Common myeloid progenitor, CD34-positive (primary cell): ENCODE measurements at regions of chr9 and their contacts with region 1.

Region 1: GRCh38 chr9:33466565-33467495 is 6.9 kb downstream of the NOL6 start:
- DNase-seq: peak in 2 of 3 donors; percentile 43 to 50
- H3K4me3 ChIP-seq: no peak overlapping the region
- H3K27ac ChIP-seq: no peak overlapping the region
- H3K4me1 ChIP-seq: peaks cover 0 to under 1% (median 0%) of the 10 kb centered on the region in 4 experiments
- H3K27me3 ChIP-seq: no peaks in the 10 kb centered on the region

Region 2: DNA sequence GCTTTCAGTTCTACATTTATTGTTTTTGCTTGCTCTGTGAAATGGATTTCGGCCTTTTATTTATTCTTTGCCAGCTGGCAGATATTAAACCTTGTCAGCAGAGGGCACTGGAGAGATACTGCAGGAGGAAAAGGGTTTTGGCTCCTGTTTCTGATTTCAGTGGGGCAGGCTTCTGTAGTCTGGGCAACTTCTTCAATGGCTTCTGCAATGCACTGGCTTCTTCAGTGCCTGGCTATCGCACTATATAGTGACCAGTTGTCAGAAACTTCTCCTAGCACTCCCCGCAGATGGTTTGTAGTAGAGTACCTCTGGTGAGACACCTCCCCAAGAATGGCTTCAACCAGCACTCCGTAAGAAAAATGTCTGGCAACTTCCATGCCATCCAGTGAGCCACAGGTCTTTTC is 179.7 kb before region 1 on chr9:
- CTCF ChIA-PET with region 1: interaction called, 14 read pairs
- POLR2A ChIA-PET with region 1: no interaction called
- DNase-seq: peak; percentile 73 to 90 (median 87)
- H3K4me3 ChIP-seq: no peak overlapping the region
- H3K27ac ChIP-seq: no peak overlapping the region
- H3K4me1 ChIP-seq: peaks cover 6 to 55% (median 40%) of the 10 kb centered on the region in 4 experiments
- H3K27me3 ChIP-seq: no peaks in the 10 kb centered on the region

Region 3: GRCh38 chr9:33393581-33393980 is 73.2 kb before region 1 on chr9:
- CTCF ChIA-PET with region 1: no interaction called
- POLR2A ChIA-PET with region 1: no interaction called
- DNase-seq: no peak
- H3K4me3 ChIP-seq: no peak overlapping the region
- H3K27ac ChIP-seq: no peak overlapping the region
- H3K4me1 ChIP-seq: no peaks in the 10 kb centered on the region
- H3K27me3 ChIP-seq: no peaks in the 10 kb centered on the region

Region 4: DNA sequence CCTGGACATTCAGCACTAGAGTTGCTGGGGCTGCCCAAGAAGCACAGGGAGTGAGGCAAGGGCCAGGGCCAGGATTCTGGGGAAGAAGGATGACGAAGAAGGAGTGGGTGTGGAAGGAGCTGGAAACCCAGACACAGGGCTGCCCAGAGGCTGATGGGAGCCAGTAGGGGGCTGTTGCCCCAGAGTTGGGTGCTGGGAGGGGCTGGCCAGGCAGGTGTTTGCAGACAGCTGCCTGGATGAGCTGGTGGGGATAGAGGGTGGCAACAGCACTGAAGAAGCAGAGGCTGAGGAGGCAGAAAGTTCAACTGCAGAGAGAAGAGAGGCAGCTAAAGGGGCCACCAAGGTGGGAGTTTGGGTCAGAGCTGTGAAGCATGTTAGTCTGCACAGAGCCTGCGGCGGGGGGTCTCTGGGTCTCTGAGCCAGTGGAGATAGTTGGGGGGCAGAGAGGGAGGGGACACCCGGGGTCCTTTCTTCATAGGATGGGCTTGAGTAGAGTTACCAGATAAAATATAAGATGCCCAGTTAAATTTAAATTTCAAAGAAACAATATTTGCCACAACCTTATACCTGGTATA is 62.0 kb before region 1 on chr9:
- CTCF ChIA-PET with region 1: interaction called, 40 read pairs
- POLR2A ChIA-PET with region 1: no interaction called
- DNase-seq: no peak
- H3K4me3 ChIP-seq: no peak overlapping the region
- H3K27ac ChIP-seq: no peak overlapping the region
- H3K4me1 ChIP-seq: no peaks in the 10 kb centered on the region
- H3K27me3 ChIP-seq: no peaks in the 10 kb centered on the region

Region 5: DNA sequence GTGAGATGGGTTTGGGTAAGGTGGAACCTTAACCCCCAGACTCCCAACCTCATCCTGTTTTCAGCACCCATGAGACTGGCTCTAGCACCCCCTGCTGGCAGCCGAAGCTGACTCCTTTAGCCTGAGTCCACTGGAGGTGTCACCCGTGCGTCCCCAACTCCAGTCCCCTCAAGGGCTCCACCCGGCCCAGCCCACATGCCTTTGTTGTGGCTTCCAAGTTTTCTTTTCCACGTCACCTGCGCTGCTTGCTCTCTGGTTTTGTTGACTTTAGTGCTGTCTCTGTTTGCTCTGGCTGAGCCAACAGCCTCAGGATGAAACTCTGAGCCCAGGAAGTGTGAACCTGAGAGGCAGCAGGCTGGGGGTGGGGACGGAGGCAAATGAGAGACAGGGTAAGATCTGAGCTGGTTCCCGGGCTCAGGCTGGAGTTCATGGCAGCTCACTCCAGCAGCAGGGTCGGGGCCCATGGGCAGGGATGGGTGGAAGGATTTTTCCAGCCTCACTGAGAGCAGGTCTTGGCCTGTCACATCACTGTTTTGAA is 51.3 kb before region 1 on chr9:
- CTCF ChIA-PET with region 1: interaction called, 17 read pairs
- POLR2A ChIA-PET with region 1: no interaction called
- DNase-seq: peak; percentile 53 to 74 (median 64)
- H3K4me3 ChIP-seq: no peak overlapping the region
- H3K27ac ChIP-seq: no peak overlapping the region
- H3K4me1 ChIP-seq: peaks cover 0 to 10% (median 3%) of the 10 kb centered on the region in 4 experiments
- H3K27me3 ChIP-seq: no peaks in the 10 kb centered on the region

Region 6: GRCh38 chr9:33430942-33431341 is 35.9 kb before region 1 on chr9:
- CTCF ChIA-PET with region 1: interaction called, 11 read pairs
- POLR2A ChIA-PET with region 1: no interaction called
- DNase-seq: peak in 1 of 3 donors; percentile 8
- H3K4me3 ChIP-seq: no peak overlapping the region
- H3K27ac ChIP-seq: no peak overlapping the region
- H3K4me1 ChIP-seq: peaks cover 0 to 5% (median 0%) of the 10 kb centered on the region in 4 experiments
- H3K27me3 ChIP-seq: no peaks in the 10 kb centered on the region

Region 7: GRCh38 chr9:33446946-33447798 is 19.7 kb before region 1 on chr9 and contains the start of gene AQP3:
- CTCF ChIA-PET with region 1: interaction called, 172 read pairs
- POLR2A ChIA-PET with region 1: no interaction called
- DNase-seq: peak; percentile 41 to 73 (median 63)
- H3K4me3 ChIP-seq: peak within 1 kb of the TSS; percentile 9 to 73 (median 62)
- H3K27ac ChIP-seq: no peak within 1 kb of the TSS
- H3K4me1 ChIP-seq: peaks cover 3 to 42% (median 28%) of the 10 kb centered on the region in 4 experiments
- H3K27me3 ChIP-seq: peaks cover 0 to 6% (median 4%) of the 10 kb centered on the region in 5 experiments

Region 8: DNA sequence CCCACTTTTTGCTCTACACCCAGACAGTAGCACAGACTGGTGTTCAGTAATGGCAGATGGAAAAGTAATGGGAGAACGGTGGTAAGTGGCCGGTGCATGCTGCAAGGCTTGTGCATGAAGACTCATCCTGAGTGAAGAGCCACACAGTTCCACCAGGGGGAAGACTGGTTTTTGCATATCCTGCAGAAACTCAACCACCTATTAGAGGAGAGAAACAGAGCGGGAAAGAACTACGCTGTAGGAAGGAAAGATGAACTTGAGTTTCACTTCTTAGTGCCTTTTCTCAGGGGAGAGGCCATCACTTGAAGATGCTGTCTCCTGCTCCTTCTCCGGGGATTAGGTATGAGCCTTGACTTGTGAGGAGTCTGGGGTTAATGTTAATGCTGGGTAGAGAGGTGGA is 319.1 kb after region 1 on chr9:
- CTCF ChIA-PET with region 1: no interaction called
- POLR2A ChIA-PET with region 1: no interaction called
- DNase-seq: peak; percentile 9 to 23 (median 22)
- H3K4me3 ChIP-seq: no peak overlapping the region
- H3K27ac ChIP-seq: no peak overlapping the region
- H3K4me1 ChIP-seq: no peaks in the 10 kb centered on the region
- H3K27me3 ChIP-seq: no peaks in the 10 kb centered on the region